A673 (cell line): ENCODE measurements at regions of chr5 and their contacts with region 1.

Region 1: GRCh38 chr5:103475629-103476240 is 86.9 kb downstream of the NUDT12 start:
- DNase-seq: peak; percentile 72
- H3K4me3 ChIP-seq: no peak overlapping the region
- H3K27ac ChIP-seq: no peak overlapping the region
- H3K4me1 ChIP-seq: no peaks in the 10 kb centered on the region
- H3K27me3 ChIP-seq: no peaks in the 10 kb centered on the region
- CTCF ChIP-seq: peak; percentile 71

Region 2: DNA sequence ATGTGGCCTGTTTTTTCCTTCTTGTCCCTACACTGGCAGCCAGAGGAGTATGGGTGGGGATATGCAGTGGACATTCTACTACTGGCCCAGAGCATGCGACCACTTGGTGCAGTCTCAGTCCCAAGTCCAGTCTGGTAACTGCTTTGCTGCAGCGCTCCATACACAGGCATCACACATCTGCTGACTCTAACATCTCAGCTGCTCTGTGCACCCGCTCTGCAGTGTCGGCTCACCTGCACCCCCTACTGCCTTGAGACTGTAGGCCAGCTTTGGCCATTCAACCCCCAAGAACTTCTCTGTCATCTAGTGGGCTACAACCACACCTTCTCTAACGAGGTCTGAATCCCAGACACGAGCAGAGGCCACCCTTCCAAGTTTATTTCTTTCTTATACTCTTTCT is 930.6 kb before region 1 on chr5:
- CTCF ChIA-PET with region 1: no interaction called
- POLR2A ChIA-PET with region 1: no interaction called
- intact Hi-C with region 1: loop called (anchors 10 kb)
- DNase-seq: peak; percentile 19
- H3K4me3 ChIP-seq: no peak overlapping the region
- H3K27ac ChIP-seq: no peak overlapping the region
- H3K4me1 ChIP-seq: no peaks in the 10 kb centered on the region
- H3K27me3 ChIP-seq: no peaks in the 10 kb centered on the region
- CTCF ChIP-seq: peak; percentile 33

Region 3: DNA sequence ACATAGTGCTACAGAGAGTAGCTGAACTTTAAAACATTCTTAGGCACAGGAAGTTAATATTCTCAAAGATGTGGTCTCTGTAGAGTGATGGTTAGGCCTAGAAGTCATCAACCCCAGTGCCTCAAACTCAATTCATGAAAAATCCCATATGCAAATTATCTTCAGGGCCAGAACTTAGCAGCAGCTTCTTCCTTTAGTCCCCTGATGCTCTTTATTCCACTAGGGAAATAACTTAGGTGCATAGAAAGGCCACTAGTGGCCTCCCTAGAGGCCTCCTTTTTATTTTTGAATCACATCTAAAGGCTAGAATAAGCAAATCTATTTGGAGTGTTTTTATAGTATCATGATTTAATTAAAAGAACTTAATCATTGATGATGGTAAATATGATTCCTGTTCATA is 444.1 kb before region 1 on chr5:
- CTCF ChIA-PET with region 1: no interaction called
- POLR2A ChIA-PET with region 1: no interaction called
- intact Hi-C with region 1: loop called (anchors 10 kb)
- DNase-seq: no peak
- H3K4me3 ChIP-seq: no peak overlapping the region
- H3K27ac ChIP-seq: no peak overlapping the region
- H3K4me1 ChIP-seq: no peaks in the 10 kb centered on the region
- H3K27me3 ChIP-seq: no peaks in the 10 kb centered on the region
- CTCF ChIP-seq: peak; percentile 47; the same call in 1 of the 2 replicates

Region 4: DNA sequence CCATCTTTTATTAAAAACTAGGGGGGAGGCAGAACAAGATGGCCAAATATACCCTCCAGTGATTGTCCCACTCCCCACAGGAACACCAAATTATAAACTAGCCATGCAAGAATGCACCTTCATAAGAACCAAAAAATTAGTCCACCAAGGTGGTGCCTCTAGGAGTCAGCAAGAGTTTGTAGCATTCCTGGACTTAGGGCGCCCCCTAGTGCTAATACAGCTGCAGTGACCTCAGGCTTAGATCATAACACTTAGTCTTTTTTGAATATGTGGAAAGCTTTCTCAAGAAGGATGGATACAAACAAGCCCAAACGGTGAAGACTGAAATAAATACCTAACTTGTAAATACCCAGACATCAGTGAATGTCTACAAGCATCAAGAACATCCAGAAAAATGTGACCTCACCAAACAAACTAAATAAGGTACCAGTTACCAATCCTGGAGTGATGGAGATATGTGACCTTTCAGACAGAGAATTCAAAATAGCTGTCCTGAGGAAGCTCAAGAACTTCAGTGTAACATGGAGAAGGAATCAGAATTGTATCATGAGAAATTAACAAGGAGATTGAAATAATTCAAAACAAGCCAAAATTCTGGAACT is 336.4 kb before region 1 on chr5:
- CTCF ChIA-PET with region 1: no interaction called
- POLR2A ChIA-PET with region 1: no interaction called
- intact Hi-C with region 1: loop called (anchors 10 kb)
- DNase-seq: peak; percentile 82
- H3K4me3 ChIP-seq: no peak overlapping the region
- H3K27ac ChIP-seq: no peak overlapping the region
- H3K4me1 ChIP-seq: no peaks in the 10 kb centered on the region
- H3K27me3 ChIP-seq: no peaks in the 10 kb centered on the region
- CTCF ChIP-seq: peak; percentile 96

Region 5: DNA sequence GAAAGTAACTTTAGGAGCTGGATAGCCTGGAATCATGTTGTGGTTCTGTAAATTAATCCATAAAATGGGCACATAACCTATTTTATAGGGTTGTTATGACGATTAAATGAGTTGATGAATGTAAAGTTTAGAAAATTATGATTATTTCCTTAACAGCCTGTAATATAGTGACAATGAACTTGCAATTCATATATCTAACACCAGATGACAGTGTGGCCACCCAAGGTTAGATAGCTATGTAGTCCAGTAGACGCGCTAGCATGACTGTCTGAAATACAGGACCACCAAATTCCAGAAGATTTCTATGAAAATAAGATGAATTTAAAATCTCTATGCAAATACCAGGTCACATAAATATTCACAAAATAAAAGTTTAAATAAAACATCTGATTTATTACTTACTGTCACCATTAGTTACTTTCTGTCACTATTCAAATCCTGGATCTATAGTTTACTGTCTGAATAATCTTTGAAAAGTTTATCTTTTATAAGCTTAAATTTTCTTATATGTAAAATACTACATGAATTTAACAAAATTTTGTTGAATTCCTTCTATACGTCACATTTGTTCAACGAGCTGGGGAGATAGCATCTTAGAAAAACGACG is 243.2 kb before region 1 on chr5:
- CTCF ChIA-PET with region 1: interaction called, 7 read pairs
- POLR2A ChIA-PET with region 1: no interaction called
- intact Hi-C with region 1: loop called (anchors 1 kb)
- DNase-seq: peak; percentile 66
- H3K4me3 ChIP-seq: no peak overlapping the region
- H3K27ac ChIP-seq: no peak overlapping the region
- H3K4me1 ChIP-seq: no peaks in the 10 kb centered on the region
- H3K27me3 ChIP-seq: no peaks in the 10 kb centered on the region
- CTCF ChIP-seq: peak; percentile 83